AG04450 (cell line): ENCODE measurements at regions of chr17 and their contacts with region 1.

Region 1: DNA sequence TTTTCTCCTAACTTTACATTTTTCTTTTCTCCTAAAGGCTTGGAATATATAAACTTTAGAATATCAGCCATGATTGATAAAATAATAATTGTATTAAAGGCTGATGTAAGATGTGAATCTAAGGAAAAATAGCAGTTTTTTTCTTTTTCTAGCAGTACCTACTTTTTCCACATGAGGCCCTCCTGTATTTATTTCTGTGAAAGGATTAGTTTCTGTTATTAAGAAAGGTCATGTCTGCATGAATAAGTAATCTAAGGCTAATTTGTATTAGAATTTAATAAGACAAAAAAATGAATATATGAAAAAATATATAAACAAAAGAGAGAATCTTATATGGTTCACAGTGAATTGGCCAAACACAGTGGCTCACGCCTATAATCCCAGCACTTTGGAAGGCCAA is 85.3 kb downstream of the STXBP4 start:
- DNase-seq: no peak
- H3K4me3 ChIP-seq: no peak overlapping the region
- H3K27ac ChIP-seq: no peak overlapping the region
- H3K27me3 ChIP-seq: no peaks in the 10 kb centered on the region
- CTCF ChIP-seq: peak; percentile 46

Region 2: DNA sequence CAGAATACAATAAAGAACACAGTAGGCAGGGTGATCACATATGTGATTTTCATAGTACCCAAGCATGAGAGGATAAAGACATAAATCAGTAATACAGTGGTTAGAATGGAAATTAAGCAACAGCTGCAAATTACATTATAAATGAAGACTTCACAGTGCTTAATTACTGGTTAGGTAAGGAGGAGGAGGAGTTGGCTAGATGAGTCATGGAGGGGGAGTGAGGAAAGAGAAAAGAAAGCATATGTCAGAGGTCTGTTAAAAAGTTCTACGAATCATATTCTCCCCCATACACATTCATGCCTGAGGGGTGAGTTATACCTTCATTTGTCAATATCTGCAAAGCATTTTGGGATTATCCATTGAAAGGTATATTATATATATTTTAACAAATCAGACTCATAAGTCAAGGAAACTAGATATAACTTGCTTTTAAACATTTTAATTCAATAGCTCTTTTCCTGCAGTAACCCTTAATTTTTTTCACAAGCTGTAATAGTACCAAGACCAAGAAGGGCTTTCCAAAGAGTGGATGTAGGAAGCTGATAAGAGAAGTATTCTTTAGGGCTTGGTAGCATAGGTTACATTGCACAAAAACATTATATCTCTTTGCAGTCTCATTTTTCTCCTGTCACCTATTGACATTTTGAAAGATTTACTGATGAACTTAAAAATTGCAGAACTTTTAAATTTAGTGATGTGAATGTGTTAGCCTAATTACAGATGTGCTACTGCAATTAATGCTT is 14.0 kb after region 1 on chr17:
- CTCF ChIA-PET with region 1: no interaction called
- POLR2A ChIA-PET with region 1: no interaction called
- DNase-seq: no peak
- H3K4me3 ChIP-seq: no peak overlapping the region
- H3K27ac ChIP-seq: no peak overlapping the region
- H3K27me3 ChIP-seq: no peaks in the 10 kb centered on the region
- CTCF ChIP-seq: no peak

Region 3: DNA sequence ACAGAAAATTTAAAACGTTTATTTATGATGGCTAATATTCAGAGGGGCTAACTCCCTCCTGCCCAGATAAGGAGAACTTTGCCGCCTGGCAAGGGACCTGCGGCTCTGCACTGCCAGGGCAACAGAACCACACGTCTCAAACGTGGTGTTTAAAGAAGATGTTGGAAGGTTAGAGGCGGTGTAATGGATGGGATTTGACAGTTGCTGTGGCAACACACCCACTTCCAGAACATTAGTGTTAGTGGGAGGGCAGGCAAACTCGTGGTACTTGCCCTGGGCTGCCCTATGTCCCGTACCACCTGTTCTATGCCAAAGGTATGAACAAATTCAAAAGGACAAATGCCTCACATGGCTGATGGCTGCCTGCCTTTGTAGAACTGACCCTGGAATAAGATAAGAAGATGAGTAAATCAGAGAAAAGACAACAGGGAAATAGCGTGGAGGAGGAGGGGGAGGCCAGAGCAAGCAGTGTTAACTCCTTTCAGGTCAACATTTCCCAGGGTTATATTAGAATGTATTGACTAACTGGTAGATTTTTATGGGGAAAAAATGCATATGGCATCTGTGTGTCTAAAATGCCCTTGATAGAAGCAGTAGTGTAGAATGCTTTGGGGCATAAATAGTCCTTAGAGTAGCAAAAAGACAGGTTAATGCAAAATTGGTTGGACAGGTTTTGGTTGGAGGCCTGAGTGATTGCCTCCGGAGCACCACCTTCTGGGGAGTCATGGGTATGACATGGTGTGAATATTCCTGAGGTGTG is 241.7 kb after region 1 on chr17:
- CTCF ChIA-PET with region 1: interaction called, 11 read pairs
- POLR2A ChIA-PET with region 1: no interaction called
- DNase-seq: peak; percentile 7
- H3K4me3 ChIP-seq: no peak overlapping the region
- H3K27ac ChIP-seq: no peak overlapping the region
- H3K27me3 ChIP-seq: peaks cover 2% of the 10 kb centered on the region
- CTCF ChIP-seq: peak; percentile 92